B cell (primary cell): ENCODE measurements at regions of chr17 and their contacts with region 1.

Region 1: GRCh38 chr17:17476865-17477467 is at the start of gene MED9:
- DNase-seq: peak; percentile 96
- ATAC-seq: peak; percentile 100
- H3K4me3 ChIP-seq: peak within 1 kb of the TSS; percentile 83 to 92 (median 89)
- H3K4me3 Mint-ChIP-seq: peak within 1 kb of the TSS; percentile 91
- H3K27ac ChIP-seq: peak within 1 kb of the TSS; percentile 52 to 91
- H3K27ac Mint-ChIP-seq: peak within 1 kb of the TSS; percentile 95
- H3K4me1 ChIP-seq: peaks cover 12 to 17% of the 10 kb centered on the region in 2 donors
- H3K4me1 Mint-ChIP-seq: peaks cover 40% of the 10 kb centered on the region
- H3K27me3 ChIP-seq: no peaks in the 10 kb centered on the region
- H3K27me3 Mint-ChIP-seq: peaks cover 7% of the 10 kb centered on the region
- CTCF ChIP-seq: no peak
- total RNA-seq, gene MED9: 18.9 and 19.1 TPM in 2 replicates

Region 2: GRCh38 chr17:16653209-16654041 is 823.5 kb before region 1 on chr17 and contains the start of gene ZNF624:
- CTCF ChIA-PET with region 1: no interaction called
- POLR2A ChIA-PET with region 1: no interaction called
- intact Hi-C with region 1: loop called (anchors 5 kb)
- DNase-seq: peak; percentile 91
- ATAC-seq: peak; percentile 95
- H3K4me3 ChIP-seq: peak within 1 kb of the TSS; percentile 54 to 96 (median 86)
- H3K4me3 Mint-ChIP-seq: peak within 1 kb of the TSS; percentile 94
- H3K27ac ChIP-seq: peak within 1 kb of the TSS; percentile 39 to 78
- H3K27ac Mint-ChIP-seq: peak within 1 kb of the TSS; percentile 87
- H3K4me1 ChIP-seq: peaks cover 6 to 11% of the 10 kb centered on the region in 2 donors
- H3K4me1 Mint-ChIP-seq: peaks cover 16% of the 10 kb centered on the region
- H3K27me3 ChIP-seq: peaks cover 0 to 5% (median 1%) of the 10 kb centered on the region in 4 experiments
- H3K27me3 Mint-ChIP-seq: peaks cover 7% of the 10 kb centered on the region
- CTCF ChIP-seq: no peak
- total RNA-seq, gene ZNF624: 12.0 and 13.5 TPM in 2 replicates